ENCODE measurements at regions of chr1 and their contacts with region 1.

Region 1: DNA sequence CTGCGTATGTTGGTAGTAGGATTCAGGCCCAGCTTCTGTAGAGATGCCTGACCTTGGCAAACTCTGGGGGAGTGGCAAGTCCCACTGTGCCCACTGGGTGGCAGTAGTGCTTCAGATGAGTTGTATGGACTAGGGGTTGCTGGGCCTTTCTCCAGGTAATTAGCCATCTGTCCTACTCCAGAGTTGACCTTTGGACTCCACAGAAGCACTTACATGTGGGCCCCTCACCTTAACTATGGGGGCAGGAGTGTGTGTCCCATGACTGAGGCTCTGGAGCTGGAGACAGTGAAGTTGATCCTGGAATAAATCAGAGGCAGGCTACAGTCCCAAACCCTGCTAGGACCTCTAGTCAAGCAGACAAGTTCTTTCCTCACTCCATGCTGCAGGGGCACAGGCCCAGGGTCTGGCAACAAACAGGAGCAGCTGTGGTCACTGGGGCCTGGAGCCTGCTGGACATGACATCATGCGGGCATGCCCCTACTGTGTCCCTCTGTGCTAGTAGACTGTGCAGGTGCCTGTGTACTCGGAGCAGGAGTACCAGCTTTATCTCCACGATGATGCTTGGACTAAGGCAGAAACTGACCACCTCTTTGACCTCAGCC is 4.6 kb downstream of the DMAP1 start:
- DNase-seq: peak; percentile 93
- H3K4me3 ChIP-seq: no peak overlapping the region
- H3K27ac ChIP-seq: no peak overlapping the region
- H3K4me1 ChIP-seq: peaks cover 7% of the 10 kb centered on the region
- H3K27me3 ChIP-seq: no peaks in the 10 kb centered on the region
- CTCF ChIP-seq: peak; percentile 88

Region 2: DNA sequence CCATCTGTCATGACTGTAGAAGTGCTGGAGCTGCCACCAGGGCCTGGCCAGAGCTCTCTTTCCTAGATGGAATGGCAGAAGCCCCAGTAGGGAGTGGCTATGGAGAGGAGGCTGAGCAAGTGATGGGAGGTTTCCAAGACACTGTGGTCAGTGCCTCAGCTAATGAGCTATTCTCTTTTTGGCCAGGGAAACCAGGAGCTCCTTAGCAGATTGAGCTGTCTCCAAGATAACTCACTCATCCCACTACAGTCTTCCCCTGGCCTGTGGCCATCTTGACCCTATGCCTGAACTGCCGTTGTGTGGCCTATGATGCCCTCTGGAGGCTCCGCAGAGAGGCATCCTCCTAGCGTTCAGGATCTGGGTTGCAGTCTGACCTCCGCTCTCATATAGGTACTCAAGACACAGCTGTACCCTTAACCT is 76.7 kb after region 1 on chr1:
- intact Hi-C with region 1: loop called (anchors 5 kb)
- DNase-seq: peak; percentile 76
- H3K4me3 ChIP-seq: no peak overlapping the region
- H3K27ac ChIP-seq: no peak overlapping the region
- H3K4me1 ChIP-seq: peaks cover 14% of the 10 kb centered on the region
- H3K27me3 ChIP-seq: no peaks in the 10 kb centered on the region
- CTCF ChIP-seq: peak; percentile 56

Region 3: GRCh38 chr1:44318097-44319088 is 100.5 kb after region 1 on chr1:
- intact Hi-C with region 1: loop called (anchors 5 kb)
- DNase-seq: peak; percentile 53
- H3K4me3 ChIP-seq: no peak overlapping the region
- H3K27ac ChIP-seq: no peak overlapping the region
- H3K4me1 ChIP-seq: no peaks in the 10 kb centered on the region
- H3K27me3 ChIP-seq: no peaks in the 10 kb centered on the region
- CTCF ChIP-seq: peak; percentile 76

Region 4: DNA sequence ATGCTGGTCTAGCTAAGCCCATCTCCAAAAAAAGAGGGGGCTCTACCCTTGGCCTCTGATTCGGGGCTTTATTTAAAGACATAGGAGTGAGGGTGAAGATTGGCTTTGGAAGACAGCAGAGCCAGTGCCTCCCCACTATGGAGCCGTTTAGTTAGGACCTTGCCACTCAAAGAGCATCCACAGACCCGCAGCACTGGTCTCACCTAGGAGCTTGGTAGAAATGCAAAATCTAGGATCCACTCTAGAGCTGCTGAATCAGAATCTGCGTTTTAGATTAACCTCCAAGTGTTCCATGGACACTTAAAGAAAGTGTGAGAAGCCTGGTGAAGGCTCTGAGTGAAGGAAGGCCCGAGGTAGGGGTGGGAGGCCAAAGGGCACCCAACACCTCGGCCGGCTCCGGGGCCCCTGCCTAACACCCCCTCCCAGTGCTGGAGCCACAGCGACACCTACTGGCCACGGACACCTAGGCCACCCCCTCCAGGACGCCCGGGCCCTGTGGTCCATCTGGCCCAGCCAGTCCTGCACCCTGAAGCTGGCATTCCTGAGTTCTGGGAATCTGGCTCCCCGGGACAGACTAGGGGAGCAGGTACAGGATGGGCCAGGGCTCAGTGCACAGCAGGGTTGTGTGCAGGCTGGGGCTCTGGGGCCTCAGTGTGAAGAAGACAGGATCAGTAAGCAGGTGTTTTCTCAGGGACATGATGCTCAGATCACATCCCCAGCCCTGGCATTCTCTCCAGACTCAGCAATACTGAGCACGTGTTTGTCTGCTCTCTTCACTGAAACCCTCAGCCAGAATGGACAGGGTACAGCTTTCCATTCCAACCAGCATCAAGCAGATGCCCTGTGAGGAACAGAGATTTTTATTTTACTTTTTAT is 377.2 kb after region 1 on chr1:
- intact Hi-C with region 1: loop called (anchors 5 kb)
- DNase-seq: peak; percentile 85
- H3K4me3 ChIP-seq: no peak overlapping the region
- H3K27ac ChIP-seq: no peak overlapping the region
- H3K4me1 ChIP-seq: no peaks in the 10 kb centered on the region
- H3K27me3 ChIP-seq: peaks cover under 1% of the 10 kb centered on the region
- CTCF ChIP-seq: peak; percentile 99